H1 (cell line): ENCODE measurements at regions of chr19 and their contacts with region 1.

Region 1: DNA sequence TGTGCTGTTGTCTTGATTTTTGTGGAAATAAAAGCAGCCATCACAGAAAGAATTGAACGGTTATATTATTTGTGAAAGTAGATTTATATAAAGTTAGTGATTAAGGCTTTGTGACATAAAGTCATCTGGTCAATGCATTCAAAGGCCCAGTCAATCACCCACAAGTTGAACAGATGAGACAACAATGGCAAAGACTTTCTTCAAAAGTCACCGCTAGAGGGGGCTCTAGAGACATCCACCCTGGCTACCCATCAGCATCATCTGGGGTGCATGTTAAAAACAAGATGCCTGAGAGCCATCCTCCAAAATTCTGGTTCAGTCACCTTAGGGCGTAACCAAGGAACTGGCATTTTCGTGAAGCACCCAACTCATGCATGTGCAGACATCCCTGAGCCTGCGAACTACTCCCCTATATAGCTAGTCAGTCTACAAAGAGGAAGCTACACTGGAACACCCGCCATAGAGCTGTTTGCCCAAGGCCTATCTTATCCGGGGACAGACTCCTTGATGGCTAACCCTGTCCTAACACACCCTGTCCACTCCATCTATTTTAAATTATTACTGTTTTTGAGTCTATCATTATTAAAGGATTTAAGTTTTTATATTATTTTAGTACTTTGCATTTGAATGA is 970.5 kb downstream of the UQCRFS1 start:
- DNase-seq: peak in 1 of 2 experiments; percentile 75
- H3K4me3 ChIP-seq: no peak overlapping the region
- H3K27ac ChIP-seq: no peak overlapping the region
- H3K4me1 ChIP-seq: peaks cover 0 to 6% (median 1%) of the 10 kb centered on the region in 4 experiments; a peak in 2 of 7 replicates
- H3K27me3 ChIP-seq: no peaks in the 10 kb centered on the region
- CTCF ChIP-seq: peak; percentile 28 to 81 (median 77)
- EP300 ChIP-seq: no peak
- POLR2A ChIP-seq: no peak
- RAD21 ChIP-seq: peak; percentile 79 to 87

Region 2: DNA sequence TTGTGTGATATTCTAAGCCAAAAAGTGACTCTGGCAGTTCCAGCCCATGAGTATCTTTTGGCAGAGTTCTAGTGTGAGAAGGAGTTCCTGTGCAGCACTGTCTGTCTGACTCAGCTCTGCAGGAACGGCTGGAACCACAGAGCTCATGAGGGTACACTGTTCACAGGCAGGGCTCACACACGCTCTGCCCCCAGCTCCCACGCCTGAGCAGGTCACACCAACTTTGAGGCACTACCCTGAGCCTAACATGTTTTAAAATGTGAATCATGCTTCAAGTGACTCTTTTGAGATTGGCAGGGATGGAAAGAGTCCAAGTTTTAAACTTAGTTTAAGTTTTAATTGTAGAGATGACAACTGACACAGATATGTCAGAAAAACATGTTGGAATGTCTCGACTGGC is 232.7 kb before region 1 on chr19:
- CTCF ChIA-PET with region 1: interaction called, 12 read pairs
- POLR2A ChIA-PET with region 1: no interaction called
- DNase-seq: no peak
- H3K4me3 ChIP-seq: no peak overlapping the region
- H3K27ac ChIP-seq: no peak overlapping the region
- H3K4me1 ChIP-seq: no peaks in the 10 kb centered on the region
- H3K27me3 ChIP-seq: no peaks in the 10 kb centered on the region
- CTCF ChIP-seq: no peak
- EP300 ChIP-seq: no peak
- POLR2A ChIP-seq: no peak
- RAD21 ChIP-seq: no peak

Region 3: DNA sequence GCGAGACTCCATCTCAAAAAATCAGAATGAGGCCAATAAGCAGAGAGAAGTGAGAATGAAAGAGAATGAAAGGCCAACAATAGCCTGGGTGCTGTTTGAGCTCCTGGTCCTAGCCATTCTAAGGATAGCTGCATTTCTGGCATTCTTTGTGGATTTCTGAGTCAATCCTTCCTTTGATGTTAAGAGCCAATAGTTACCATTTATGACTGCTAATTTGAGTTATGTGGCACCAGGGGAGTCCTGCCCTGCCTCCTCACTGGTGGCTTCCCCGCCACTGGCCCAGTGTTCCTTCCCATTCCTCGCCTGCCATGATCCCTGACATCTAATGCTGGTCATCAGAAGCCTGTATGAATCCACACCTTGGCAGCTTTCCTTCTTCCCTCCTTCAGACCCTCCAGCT is 20.7 kb before region 1 on chr19:
- CTCF ChIA-PET with region 1: interaction called, 20 read pairs
- POLR2A ChIA-PET with region 1: no interaction called
- DNase-seq: no peak
- H3K4me3 ChIP-seq: no peak overlapping the region
- H3K27ac ChIP-seq: no peak overlapping the region
- H3K4me1 ChIP-seq: peaks cover 0 to 2% (median under 1%) of the 10 kb centered on the region in 4 experiments; a peak in 5 of 7 replicates
- H3K27me3 ChIP-seq: no peaks in the 10 kb centered on the region
- CTCF ChIP-seq: no peak
- EP300 ChIP-seq: no peak
- POLR2A ChIP-seq: no peak
- RAD21 ChIP-seq: no peak

Region 4: DNA sequence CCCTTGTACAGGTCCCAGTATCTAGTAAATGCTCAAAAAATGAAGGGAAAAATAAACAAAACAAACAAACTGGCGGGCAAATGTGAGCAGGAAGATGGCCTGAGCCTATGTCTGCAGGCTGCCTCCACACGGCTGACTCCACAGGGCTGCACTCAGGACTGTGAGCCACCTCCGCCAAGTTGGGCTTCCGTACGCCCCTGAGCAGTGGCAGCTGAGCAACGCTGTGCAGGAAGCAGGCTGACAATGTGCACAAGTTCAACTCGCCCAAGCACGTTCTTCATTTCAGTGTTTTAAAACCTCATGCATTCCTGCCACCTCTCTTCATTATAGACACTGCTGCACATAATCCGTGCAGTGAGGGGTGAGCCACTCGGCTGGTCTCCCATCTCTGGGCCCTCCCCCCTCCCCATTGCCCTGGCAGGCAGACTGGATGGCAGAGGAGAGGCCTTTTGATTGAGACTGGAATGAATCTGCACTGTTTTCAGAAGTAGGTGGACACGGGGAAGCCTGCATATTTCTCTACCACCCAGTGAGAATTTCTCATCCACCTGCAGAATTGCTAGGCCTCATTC is 55.3 kb after region 1 on chr19:
- CTCF ChIA-PET with region 1: interaction called, 10 read pairs
- POLR2A ChIA-PET with region 1: no interaction called
- DNase-seq: no peak
- H3K4me3 ChIP-seq: no peak overlapping the region
- H3K27ac ChIP-seq: no peak overlapping the region
- H3K4me1 ChIP-seq: peaks cover under 1 to 17% (median 11%) of the 10 kb centered on the region in 4 experiments; a peak in 6 of 7 replicates
- H3K27me3 ChIP-seq: no peaks in the 10 kb centered on the region
- CTCF ChIP-seq: no peak
- EP300 ChIP-seq: no peak
- POLR2A ChIP-seq: no peak
- RAD21 ChIP-seq: no peak

Region 5: GRCh38 chr19:28313633-28314032 is 71.2 kb after region 1 on chr19:
- CTCF ChIA-PET with region 1: interaction called, 289 read pairs
- POLR2A ChIA-PET with region 1: no interaction called
- DNase-seq: no peak
- H3K4me3 ChIP-seq: no peak overlapping the region
- H3K27ac ChIP-seq: no peak overlapping the region
- H3K4me1 ChIP-seq: peaks cover 0 to 10% (median 5%) of the 10 kb centered on the region in 4 experiments; a peak in 5 of 7 replicates
- H3K27me3 ChIP-seq: no peaks in the 10 kb centered on the region
- CTCF ChIP-seq: no peak
- EP300 ChIP-seq: no peak
- POLR2A ChIP-seq: no peak
- RAD21 ChIP-seq: no peak